ENCODE measurements at regions of chr5 and their contacts with region 1.

Region 1: GRCh38 chr5:112976432-112977309 is at the start of gene DCP2:
- DNase-seq: peak; percentile 95 to 99 (median 98)
- ATAC-seq: peak; percentile 88
- H3K4me3 ChIP-seq: peak within 1 kb of the TSS; percentile 64
- H3K27ac ChIP-seq: peak within 1 kb of the TSS; percentile 86
- H3K4me1 ChIP-seq: peaks cover 17 to 36% of the 10 kb centered on the region in 2 experiments
- H3K27me3 ChIP-seq: no peaks in the 10 kb centered on the region
- CTCF ChIP-seq: no peak
- EP300 ChIP-seq: no peak; the same call in 1 of the 2 replicates
- POLR2A ChIP-seq: peak; percentile 97
- RAD21 ChIP-seq: no peak
- polyA plus RNA-seq, gene DCP2: 25.9 to 36.8 TPM

Region 2: GRCh38 chr5:112752335-112752734 is 224.3 kb before region 1 on chr5:
- CTCF ChIA-PET with region 1: no interaction called
- POLR2A ChIA-PET with region 1: no interaction called
- in situ Hi-C with region 1: no loop called
- intact Hi-C with region 1: loop called (anchors 5 kb)
- DNase-seq: no peak
- ATAC-seq: no peak
- H3K4me3 ChIP-seq: no peak overlapping the region
- H3K27ac ChIP-seq: no peak overlapping the region
- H3K4me1 ChIP-seq: 0 out of 5 replicates have a peak, but pooled peaks cover 0 to 3% of the 10 kb centered on the region in 2 experiments
- H3K27me3 ChIP-seq: no peaks in the 10 kb centered on the region
- CTCF ChIP-seq: no peak
- EP300 ChIP-seq: no peak
- POLR2A ChIP-seq: no peak
- RAD21 ChIP-seq: no peak

Region 3: GRCh38 chr5:112860929-112861637 is 115.6 kb before region 1 on chr5 and contains the start of gene SRP19:
- CTCF ChIA-PET with region 1: no interaction called
- POLR2A ChIA-PET with region 1: no interaction called
- in situ Hi-C with region 1: no loop called
- intact Hi-C with region 1: loop called (anchors 5 kb)
- DNase-seq: peak; percentile 88 to 98 (median 92)
- ATAC-seq: peak; percentile 98
- H3K4me3 ChIP-seq: peak within 1 kb of the TSS; percentile 82
- H3K27ac ChIP-seq: peak within 1 kb of the TSS; percentile 81
- H3K4me1 ChIP-seq: peaks cover 0 to 12% of the 10 kb centered on the region in 2 experiments; a peak in 2 of 5 replicates
- H3K27me3 ChIP-seq: no peaks in the 10 kb centered on the region
- CTCF ChIP-seq: no peak
- EP300 ChIP-seq: peak; percentile 31; the same call in 1 of the 2 replicates
- POLR2A ChIP-seq: peak; percentile 86
- RAD21 ChIP-seq: peak in 1 of 2 experiments; percentile 1; a peak in 1 of 4 replicates
- polyA plus RNA-seq, gene SRP19: 287 to 357 TPM

Region 4: DNA sequence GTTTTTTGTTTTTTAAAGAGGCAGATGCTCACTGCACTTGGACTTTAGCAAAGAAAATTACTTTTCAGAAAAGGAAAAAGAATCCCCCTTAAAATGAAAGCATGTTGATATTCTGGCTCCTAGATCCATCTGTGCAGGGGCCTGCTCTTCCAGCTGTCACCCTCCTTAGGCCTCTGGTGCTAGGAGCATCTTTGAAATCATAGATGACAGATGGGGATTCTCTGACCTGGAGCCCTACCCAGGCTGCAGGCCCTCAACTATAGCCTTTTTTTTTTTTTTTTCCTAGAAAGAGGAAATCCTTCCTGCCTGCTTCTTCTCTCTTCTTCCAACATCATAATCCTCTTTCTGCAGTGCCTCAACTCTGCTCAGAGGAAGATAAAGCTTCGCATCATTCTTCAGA is 16.4 kb before region 1 on chr5:
- CTCF ChIA-PET with region 1: no interaction called
- POLR2A ChIA-PET with region 1: interaction called, 19 read pairs
- in situ Hi-C with region 1: no loop called
- intact Hi-C with region 1: no loop called
- DNase-seq: no peak
- ATAC-seq: 0 out of 3 replicates have a peak, but pooled peaks have one; percentile 6
- H3K4me3 ChIP-seq: no peak overlapping the region
- H3K27ac ChIP-seq: no peak overlapping the region
- H3K4me1 ChIP-seq: peaks cover 5 to 17% of the 10 kb centered on the region in 2 experiments; a peak in 4 of 5 replicates
- H3K27me3 ChIP-seq: no peaks in the 10 kb centered on the region
- CTCF ChIP-seq: no peak
- EP300 ChIP-seq: no peak
- POLR2A ChIP-seq: no peak
- RAD21 ChIP-seq: no peak

Region 5: GRCh38 chr5:113031104-113031503 is 54.4 kb after region 1 on chr5:
- CTCF ChIA-PET with region 1: no interaction called
- POLR2A ChIA-PET with region 1: no interaction called
- in situ Hi-C with region 1: no loop called
- intact Hi-C with region 1: no loop called
- DNase-seq: no peak
- ATAC-seq: no peak
- H3K4me3 ChIP-seq: no peak overlapping the region
- H3K27ac ChIP-seq: no peak overlapping the region
- H3K4me1 ChIP-seq: peaks cover 0 to 4% of the 10 kb centered on the region in 2 experiments; a peak in 2 of 5 replicates
- H3K27me3 ChIP-seq: no peaks in the 10 kb centered on the region
- CTCF ChIP-seq: no peak
- EP300 ChIP-seq: no peak
- POLR2A ChIP-seq: no peak
- RAD21 ChIP-seq: no peak

Region 6: DNA sequence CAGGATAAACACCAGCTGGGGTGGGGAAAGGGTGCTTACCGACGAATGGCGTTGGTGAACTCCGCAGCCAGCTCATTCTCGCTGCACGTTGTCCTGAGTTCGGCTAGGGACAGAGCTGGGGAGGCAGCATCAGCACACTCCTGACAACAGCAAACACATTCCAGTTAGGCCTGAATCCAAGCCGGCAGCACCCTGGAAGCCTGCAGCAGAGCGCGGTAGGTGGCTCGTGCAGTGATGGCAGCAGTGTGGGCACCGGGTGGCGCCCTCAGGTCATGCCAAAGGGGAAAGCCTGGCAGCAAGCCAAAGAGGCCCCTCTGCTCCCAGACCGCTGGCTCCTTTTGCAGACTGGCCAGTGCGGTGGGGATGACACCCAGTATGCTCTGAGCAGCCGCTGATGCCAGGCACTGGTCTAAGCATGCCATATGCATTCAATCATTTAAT is 66.8 kb after region 1 on chr5:
- CTCF ChIA-PET with region 1: no interaction called
- POLR2A ChIA-PET with region 1: no interaction called
- in situ Hi-C with region 1: no loop called
- intact Hi-C with region 1: loop called (anchors 1 kb)
- DNase-seq: peak in 3 of 4 experiments; percentile 23 to 51 (median 50)
- ATAC-seq: peak; percentile 49
- H3K4me3 ChIP-seq: no peak overlapping the region
- H3K27ac ChIP-seq: peak overlapping the region; percentile 92
- H3K4me1 ChIP-seq: peaks cover 37 to 49% of the 10 kb centered on the region in 2 experiments
- H3K27me3 ChIP-seq: no peaks in the 10 kb centered on the region
- CTCF ChIP-seq: peak in 2 of 3 experiments; percentile 17 to 19; a peak in 3 of 6 replicates
- EP300 ChIP-seq: no peak
- POLR2A ChIP-seq: no peak
- RAD21 ChIP-seq: peak in 1 of 2 experiments; percentile 38; a peak in 2 of 4 replicates